ENCODE measurements at regions of chr7 and their contacts with region 1.

Region 1: DNA sequence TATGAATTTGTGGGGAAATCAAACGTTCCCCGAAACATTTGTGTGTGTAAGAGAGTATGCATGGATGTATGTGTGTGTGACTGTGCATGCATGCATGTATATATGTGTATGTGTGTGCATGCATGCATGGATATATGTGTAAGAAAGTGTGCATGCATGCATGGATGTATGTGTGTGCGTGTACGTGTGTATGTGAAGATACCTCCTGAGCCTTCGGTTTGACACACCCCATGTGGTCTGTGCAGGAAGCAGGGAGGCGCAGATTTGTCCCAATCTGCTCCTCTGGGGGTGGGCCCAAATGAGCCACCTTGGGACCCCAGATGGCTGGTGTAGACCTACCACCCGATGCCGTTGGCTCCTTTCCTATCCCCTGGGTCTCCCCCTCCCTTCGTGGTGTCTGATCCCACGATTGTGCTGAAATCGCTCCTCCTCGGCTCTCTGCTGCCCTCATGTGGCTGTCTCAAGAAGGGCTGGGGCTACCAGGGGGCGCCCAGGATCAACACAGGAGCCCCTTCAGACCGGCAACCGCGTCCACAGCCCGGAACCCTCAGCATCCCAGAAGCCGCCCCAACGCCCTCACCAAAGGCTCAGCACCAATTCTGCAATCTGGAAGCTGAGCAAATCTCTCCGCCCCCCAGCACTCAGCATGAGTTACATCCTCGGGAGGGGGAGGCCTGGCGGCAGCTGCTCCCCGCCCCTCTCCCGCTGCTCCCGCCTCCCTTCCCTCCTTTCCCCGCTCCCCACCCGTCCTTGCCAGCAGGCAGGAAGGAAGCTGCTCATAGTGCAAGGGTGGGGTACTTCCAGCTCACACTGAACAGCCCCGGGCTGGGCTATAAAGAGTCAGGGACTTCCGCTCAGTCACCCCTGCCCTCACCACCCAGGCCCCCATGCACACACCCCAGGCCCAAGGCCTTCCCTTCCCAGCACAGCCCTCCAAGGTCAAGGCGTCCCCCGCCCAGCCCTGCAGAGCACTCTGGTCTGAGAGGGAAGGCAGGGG is 2.3 kb upstream of the NOS3 start:
- DNase-seq: peak; percentile 46 to 83 (median 64)
- ATAC-seq: peak; percentile 76
- H3K4me3 ChIP-seq: peak overlapping the region; percentile 28
- H3K4me3 Mint-ChIP-seq: peak overlapping the region; percentile 63
- H3K27ac ChIP-seq: peak overlapping the region in 1 of 2 donors; percentile 33
- H3K27ac Mint-ChIP-seq: no peak overlapping the region
- H3K4me1 ChIP-seq: peaks cover 42% of the 10 kb centered on the region
- H3K4me1 Mint-ChIP-seq: peaks cover 38% of the 10 kb centered on the region
- H3K27me3 ChIP-seq: no peaks in the 10 kb centered on the region
- H3K27me3 Mint-ChIP-seq: peaks cover 4% of the 10 kb centered on the region
- CTCF ChIP-seq: peak; percentile 90

Region 2: DNA sequence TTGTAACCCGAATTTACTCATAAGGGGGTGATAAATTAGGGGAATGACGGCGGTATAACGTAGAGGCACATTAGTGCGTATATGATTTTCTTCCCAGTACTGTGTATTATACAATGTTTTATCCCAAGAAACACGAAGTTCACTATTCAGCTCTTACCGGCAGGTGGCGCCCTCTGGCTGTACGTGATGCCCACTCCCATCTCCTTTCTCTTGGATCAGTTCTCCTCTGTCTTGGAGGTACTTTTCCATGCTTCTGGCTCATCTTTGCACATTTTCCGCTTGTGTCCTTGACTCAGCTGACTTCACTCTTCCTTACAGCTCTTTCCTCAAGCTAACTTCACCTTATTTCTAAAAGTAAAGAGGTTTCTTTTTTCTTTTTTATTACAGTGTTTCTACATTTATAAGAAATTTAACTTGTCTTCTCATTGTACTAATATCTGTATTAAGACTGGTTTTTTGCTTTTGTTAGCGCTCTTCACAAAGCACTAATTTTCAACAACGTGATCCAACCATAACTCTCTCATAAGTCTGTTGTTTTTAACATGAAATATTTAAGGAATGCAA is 209.7 kb before region 1 on chr7:
- CTCF ChIA-PET with region 1: interaction called, 3 read pairs
- POLR2A ChIA-PET with region 1: no interaction called
- intact Hi-C with region 1: loop called in 1 of 2 experiments (anchors 5 kb)
- DNase-seq: peak; percentile 59 to 85 (median 66)
- ATAC-seq: peak; percentile 71
- H3K4me3 ChIP-seq: no peak overlapping the region
- H3K4me3 Mint-ChIP-seq: no peak overlapping the region
- H3K27ac ChIP-seq: no peak overlapping the region
- H3K27ac Mint-ChIP-seq: no peak overlapping the region
- H3K4me1 ChIP-seq: peaks cover 6% of the 10 kb centered on the region
- H3K4me1 Mint-ChIP-seq: peaks cover 5% of the 10 kb centered on the region
- H3K27me3 ChIP-seq: peaks cover 0 to 3% of the 10 kb centered on the region in 2 experiments
- H3K27me3 Mint-ChIP-seq: peaks cover 4% of the 10 kb centered on the region
- CTCF ChIP-seq: peak; percentile 94

Region 3: DNA sequence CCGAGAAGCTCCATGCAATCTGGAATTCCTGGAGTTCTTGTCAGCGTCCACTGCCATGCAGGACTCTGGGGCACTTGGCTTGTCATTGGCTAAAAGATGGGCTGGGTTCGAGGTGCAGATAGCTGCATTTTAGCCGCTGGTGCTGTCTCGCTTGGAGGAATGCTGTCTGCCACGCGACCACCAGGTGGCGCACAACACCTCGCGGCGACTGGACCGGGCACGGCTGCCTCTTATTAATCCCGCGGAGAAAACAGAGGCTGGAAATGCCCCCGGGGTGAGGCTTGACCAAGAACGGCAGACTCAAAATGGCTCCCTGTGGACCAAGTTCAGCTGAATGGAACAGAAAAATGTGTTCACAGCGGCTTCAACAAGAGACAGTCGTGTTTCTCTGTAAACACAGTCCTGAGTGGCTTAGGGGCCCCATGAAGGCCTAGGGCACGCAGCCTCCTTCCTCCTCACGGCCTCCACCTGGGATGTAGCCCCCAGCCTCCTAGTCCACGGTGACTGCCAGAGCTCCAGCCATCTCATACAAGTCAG is 90.0 kb before region 1 on chr7:
- CTCF ChIA-PET with region 1: interaction called, 6 read pairs
- POLR2A ChIA-PET with region 1: interaction called, 3 read pairs
- intact Hi-C with region 1: loop called (anchors 1 to 2 kb)
- DNase-seq: peak; percentile 58 to 87 (median 76)
- ATAC-seq: peak; percentile 87
- H3K4me3 ChIP-seq: no peak overlapping the region
- H3K4me3 Mint-ChIP-seq: no peak overlapping the region
- H3K27ac ChIP-seq: no peak overlapping the region
- H3K27ac Mint-ChIP-seq: no peak overlapping the region
- H3K4me1 ChIP-seq: peaks cover 13% of the 10 kb centered on the region
- H3K4me1 Mint-ChIP-seq: no peaks in the 10 kb centered on the region
- H3K27me3 ChIP-seq: peaks cover 25 to 32% of the 10 kb centered on the region in 2 experiments
- H3K27me3 Mint-ChIP-seq: peaks cover 67% of the 10 kb centered on the region
- CTCF ChIP-seq: peak; percentile 95

Region 4: DNA sequence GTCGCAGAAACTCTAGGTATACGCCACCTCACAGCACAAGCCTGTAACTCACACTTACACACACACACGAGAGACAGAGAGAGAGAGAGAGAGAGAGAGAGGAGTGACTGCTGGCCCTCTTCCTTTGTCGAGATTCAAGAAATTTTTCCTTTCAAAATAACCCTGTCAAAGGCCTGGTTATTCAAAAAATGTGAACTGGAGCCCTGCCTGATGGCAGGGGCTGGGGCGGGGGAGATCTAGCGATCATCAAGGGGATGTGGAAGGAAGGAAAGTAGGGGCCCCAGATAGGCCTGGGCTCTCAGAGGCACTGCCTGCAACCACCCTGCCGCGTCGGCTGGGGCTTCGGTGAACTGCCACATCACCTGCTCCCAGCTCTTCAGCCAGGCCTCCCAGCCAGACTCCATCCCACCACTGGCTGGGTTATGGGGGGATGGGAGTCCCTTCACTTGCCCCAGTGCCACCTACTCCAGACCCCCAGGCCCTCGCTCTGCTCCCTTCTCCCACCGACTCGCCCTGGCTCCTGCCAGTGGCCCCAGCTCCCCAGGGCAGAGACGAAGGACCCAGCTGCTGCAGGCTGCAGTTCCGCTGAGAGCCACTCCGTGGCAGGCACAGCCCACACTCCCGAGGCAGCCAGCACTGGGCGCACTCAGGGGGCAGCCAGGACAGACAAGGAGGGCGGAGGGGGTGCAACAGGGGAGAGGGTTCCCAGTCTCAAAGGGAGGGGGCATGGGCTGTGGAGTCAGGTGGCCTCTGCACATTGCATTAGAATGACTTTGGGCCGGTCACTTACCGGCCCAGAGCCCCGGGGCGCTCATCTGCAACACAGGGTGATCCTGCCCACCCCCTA is 25.8 kb before region 1 on chr7:
- CTCF ChIA-PET with region 1: interaction called, 28 read pairs
- POLR2A ChIA-PET with region 1: interaction called, 3 read pairs
- intact Hi-C with region 1: loop called (anchors 1 kb)
- DNase-seq: peak; percentile 41 to 81 (median 57)
- ATAC-seq: peak; percentile 90
- H3K4me3 ChIP-seq: no peak overlapping the region
- H3K4me3 Mint-ChIP-seq: no peak overlapping the region
- H3K27ac ChIP-seq: no peak overlapping the region
- H3K27ac Mint-ChIP-seq: no peak overlapping the region
- H3K4me1 ChIP-seq: peaks cover 22% of the 10 kb centered on the region
- H3K4me1 Mint-ChIP-seq: peaks cover 27% of the 10 kb centered on the region
- H3K27me3 ChIP-seq: peaks cover 11 to 15% of the 10 kb centered on the region in 2 experiments
- H3K27me3 Mint-ChIP-seq: peaks cover 28% of the 10 kb centered on the region
- CTCF ChIP-seq: peak; percentile 95

Region 5: GRCh38 chr7:150974468-150975391 is 13.8 kb before region 1 on chr7:
- CTCF ChIA-PET with region 1: interaction called, 24 read pairs
- POLR2A ChIA-PET with region 1: interaction called, 20 read pairs
- intact Hi-C with region 1: no loop called
- DNase-seq: peak; percentile 76 to 93 (median 84)
- ATAC-seq: peak; percentile 69
- H3K4me3 ChIP-seq: peak overlapping the region; percentile 65
- H3K4me3 Mint-ChIP-seq: peak overlapping the region; percentile 90
- H3K27ac ChIP-seq: peak overlapping the region; percentile 62 to 63
- H3K27ac Mint-ChIP-seq: peak overlapping the region; percentile 91
- H3K4me1 ChIP-seq: peaks cover 64% of the 10 kb centered on the region
- H3K4me1 Mint-ChIP-seq: peaks cover 60% of the 10 kb centered on the region
- H3K27me3 ChIP-seq: peaks cover 24 to 30% of the 10 kb centered on the region in 2 experiments
- H3K27me3 Mint-ChIP-seq: peaks cover 25% of the 10 kb centered on the region
- CTCF ChIP-seq: peak; percentile 24

Region 6: DNA sequence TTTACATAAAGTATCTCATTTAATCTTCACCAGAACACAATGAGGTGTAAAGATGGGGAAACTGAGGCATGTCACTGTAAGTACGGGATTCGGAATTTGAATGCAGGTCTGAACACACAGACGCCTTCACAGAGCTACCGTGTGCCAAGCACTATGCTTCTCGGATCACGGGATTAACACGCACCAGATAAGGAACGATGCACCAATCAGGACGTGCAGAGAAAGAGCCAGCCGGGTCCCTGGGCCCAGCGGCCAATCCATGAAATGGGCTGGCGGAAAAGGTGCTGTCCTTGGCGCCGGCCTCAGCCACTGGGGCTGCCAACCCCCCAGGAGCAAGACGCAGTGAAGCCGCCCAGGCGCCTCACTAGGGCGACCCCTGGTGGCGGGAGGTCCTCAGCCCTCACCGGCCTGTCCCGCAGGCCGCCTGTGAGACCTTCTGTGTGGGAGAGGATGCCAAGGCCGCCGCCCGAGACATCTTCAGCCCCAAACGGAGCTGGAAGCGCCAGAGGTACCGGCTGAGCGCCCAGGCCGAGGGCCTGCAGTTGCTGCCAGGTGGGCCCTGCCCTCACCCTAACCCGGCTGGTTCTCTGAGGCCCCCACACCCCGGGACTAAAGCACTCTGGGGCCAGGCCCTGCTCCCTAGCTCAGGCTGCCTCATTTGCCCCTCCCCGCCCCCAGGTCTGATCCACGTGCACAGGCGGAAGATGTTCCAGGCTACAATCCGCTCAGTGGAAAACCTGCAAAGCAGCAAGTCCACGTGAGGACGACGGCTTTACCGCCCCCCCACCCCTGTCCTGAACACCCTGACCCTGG is 20.2 kb after region 1 on chr7:
- CTCF ChIA-PET with region 1: interaction called, 7 read pairs
- POLR2A ChIA-PET with region 1: interaction called, 19 read pairs
- intact Hi-C with region 1: no loop called
- DNase-seq: peak; percentile 53 to 88 (median 74)
- ATAC-seq: peak; percentile 18
- H3K4me3 ChIP-seq: peak overlapping the region; percentile 52
- H3K4me3 Mint-ChIP-seq: peak overlapping the region; percentile 87
- H3K27ac ChIP-seq: peak overlapping the region; percentile 74 to 79
- H3K27ac Mint-ChIP-seq: peak overlapping the region; percentile 88
- H3K4me1 ChIP-seq: peaks cover 75% of the 10 kb centered on the region
- H3K4me1 Mint-ChIP-seq: peaks cover 71% of the 10 kb centered on the region
- H3K27me3 ChIP-seq: no peaks in the 10 kb centered on the region
- H3K27me3 Mint-ChIP-seq: no peaks in the 10 kb centered on the region
- CTCF ChIP-seq: peak; percentile 67

Region 7: DNA sequence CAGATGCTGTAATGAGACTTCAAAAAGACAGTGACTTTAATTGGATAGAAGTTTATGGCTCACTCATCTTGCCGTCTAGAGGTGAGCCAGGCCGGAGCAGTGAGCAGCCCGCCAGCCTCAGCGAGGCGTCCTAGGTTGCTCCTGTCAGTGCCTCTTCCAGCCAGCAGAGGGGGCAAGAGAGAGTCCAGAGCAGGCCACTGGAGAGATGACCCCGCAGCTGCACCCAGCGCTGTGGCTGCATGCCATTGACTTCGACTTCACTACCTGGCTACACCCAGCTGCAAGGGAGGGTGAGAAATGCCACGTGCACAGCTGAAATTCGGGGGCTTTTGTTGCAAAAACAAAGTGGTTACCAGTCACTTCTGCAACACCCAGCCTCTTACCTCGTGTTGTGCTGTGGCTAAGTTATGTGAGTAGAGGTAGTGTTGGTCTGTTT is 379.6 kb after region 1 on chr7:
- CTCF ChIA-PET with region 1: no interaction called
- POLR2A ChIA-PET with region 1: no interaction called
- intact Hi-C with region 1: no loop called
- DNase-seq: peak; percentile 59 to 88 (median 68)
- ATAC-seq: peak; percentile 97
- H3K4me3 ChIP-seq: no peak overlapping the region
- H3K4me3 Mint-ChIP-seq: no peak overlapping the region
- H3K27ac ChIP-seq: no peak overlapping the region
- H3K27ac Mint-ChIP-seq: peak overlapping the region; percentile 25
- H3K4me1 ChIP-seq: peaks cover 8% of the 10 kb centered on the region
- H3K4me1 Mint-ChIP-seq: peaks cover 6% of the 10 kb centered on the region
- H3K27me3 ChIP-seq: no peaks in the 10 kb centered on the region
- H3K27me3 Mint-ChIP-seq: no peaks in the 10 kb centered on the region
- CTCF ChIP-seq: peak; percentile 96

Measured in CD4-positive, alpha-beta T cell (primary cell).